Stomach (tissue), 19 donors: ENCODE measurements at regions of chr1 and their contacts with region 1.

Region 1: GRCh38 chr1:116485071-116485735 is 85.6 kb downstream of the CD58 start:
- DNase-seq: peak; percentile 93 to 95
- H3K4me3 ChIP-seq: no peak overlapping the region
- H3K27ac ChIP-seq: peak overlapping the region in 2 of 5 donors; percentile 10 to 38
- H3K4me1 ChIP-seq: peaks cover 19 to 41% (median 21%) of the 10 kb centered on the region in 4 donors
- H3K27me3 ChIP-seq: no peaks in the 10 kb centered on the region
- CTCF ChIP-seq: peak in 5 of 7 experiments; percentile 81 to 94 (median 90)
- EP300 ChIP-seq: no peak
- POLR2A ChIP-seq: no peak

Region 2: DNA sequence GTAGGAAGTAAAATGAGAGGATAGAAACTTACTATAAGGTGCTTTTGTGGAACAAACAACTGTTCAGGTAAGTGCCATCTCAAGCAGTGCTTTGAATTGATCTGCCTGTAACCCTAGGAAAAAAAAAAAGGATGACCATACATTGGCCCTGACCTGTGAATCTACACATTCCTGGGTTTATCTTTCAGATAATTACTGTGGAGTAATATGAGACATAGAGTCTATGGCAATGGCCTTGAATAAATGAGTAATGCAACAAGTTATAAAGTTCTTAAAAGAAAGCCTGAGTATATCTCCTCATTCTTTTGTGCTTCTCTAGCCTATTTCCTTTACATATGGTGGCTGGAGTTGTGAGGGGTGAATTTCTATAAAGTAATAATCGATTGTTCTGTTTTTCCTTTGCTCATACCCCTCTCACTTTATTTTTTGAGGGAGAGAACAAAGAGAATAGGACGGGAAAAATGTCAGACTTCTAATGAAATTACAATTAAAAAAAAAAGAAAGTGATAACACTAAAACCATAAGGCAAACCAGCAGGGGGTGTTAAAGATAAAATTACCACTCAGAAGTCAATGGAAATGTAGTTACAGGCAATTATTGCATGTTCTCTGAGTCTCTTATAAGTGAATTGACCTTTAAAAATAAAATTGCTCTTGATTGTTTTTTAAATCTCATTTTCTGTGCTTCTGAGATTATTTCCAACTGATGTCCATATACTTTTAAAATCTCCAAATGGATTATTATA is 124.6 kb before region 1 on chr1:
- intact Hi-C with region 1: loop called (anchors 10 kb)
- DNase-seq: peak in 1 of 2 donors; percentile 26
- H3K4me3 ChIP-seq: no peak overlapping the region
- H3K27ac ChIP-seq: no peak overlapping the region
- H3K4me1 ChIP-seq: peaks cover 0 to 11% (median 3%) of the 10 kb centered on the region in 4 donors
- H3K27me3 ChIP-seq: no peaks in the 10 kb centered on the region
- CTCF ChIP-seq: peak in 5 of 7 experiments; percentile 12 to 42 (median 28)
- EP300 ChIP-seq: no peak
- POLR2A ChIP-seq: no peak

Region 3: GRCh38 chr1:116426401-116426800 is 58.8 kb before region 1 on chr1:
- intact Hi-C with region 1: no loop called
- DNase-seq: no peak
- H3K4me3 ChIP-seq: no peak overlapping the region
- H3K27ac ChIP-seq: no peak overlapping the region
- H3K4me1 ChIP-seq: no peaks in the 10 kb centered on the region
- H3K27me3 ChIP-seq: no peaks in the 10 kb centered on the region
- CTCF ChIP-seq: no peak
- EP300 ChIP-seq: no peak
- POLR2A ChIP-seq: no peak